ENCODE measurements at regions of chr17 and their contacts with region 1.

Region 1: DNA sequence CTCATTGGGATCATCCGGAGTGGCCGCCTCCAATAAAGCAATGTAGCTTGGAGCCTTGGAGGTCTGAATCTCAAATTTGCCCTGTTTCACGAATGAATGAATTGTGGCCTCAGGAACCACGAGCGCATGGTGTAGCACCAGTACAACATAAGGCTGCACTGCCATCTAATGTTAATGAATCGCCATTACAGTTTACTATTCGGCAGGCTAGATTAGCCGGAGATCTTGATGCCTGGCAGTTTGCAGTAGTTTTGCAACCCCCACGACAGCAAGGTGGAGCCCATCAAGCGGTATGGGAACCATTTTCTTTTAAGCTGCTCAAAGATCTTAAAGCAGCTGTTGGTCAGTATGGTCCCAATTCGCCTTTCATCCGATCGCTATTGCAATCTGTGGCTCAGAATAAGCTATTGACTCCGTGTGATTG is 18.8 kb downstream of the ALOX15B start:
- DNase-seq: peak; percentile 15
- H3K4me3 ChIP-seq: no peak overlapping the region
- H3K27me3 ChIP-seq: peaks cover 23% of the 10 kb centered on the region
- CTCF ChIP-seq: peak; percentile 69

Region 2: DNA sequence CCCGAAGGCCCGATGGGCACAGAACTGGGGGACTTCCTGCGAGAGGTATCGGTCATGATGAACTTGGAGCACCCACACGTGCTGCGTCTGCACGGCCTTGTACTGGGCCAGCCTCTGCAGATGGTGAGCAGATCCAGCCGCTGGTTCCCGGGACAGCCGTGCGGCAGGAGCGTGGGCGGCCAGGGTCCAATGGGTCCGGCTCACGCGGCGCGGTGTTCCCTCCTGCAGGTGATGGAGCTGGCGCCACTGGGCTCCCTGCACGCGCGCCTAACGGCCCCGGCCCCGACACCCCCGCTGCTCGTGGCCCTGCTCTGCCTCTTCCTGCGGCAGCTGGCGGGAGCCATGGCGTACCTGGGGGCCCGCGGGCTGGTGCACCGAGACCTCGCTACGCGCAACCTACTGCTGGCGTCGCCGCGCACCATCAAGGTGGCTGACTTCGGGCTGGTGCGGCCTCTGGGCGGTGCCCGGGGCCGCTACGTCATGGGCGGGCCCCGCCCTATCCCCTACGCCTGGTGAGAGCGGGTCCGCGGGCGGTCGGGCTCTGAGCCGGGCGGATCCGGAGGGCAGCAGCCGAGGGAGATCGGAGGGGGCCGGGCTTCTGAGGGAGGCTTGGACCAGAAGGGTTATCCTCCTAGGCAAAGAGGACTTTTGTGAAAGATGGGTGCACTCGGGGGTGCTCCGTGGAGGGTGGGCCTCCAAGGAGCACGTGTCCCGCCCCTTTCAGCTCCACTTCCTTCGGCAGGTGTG is 673.8 kb before region 1 on chr17:
- CTCF ChIA-PET with region 1: no interaction called
- POLR2A ChIA-PET with region 1: no interaction called
- DNase-seq: no peak
- H3K4me3 ChIP-seq: peak overlapping the region; percentile 34
- H3K27me3 ChIP-seq: peaks cover 8% of the 10 kb centered on the region
- CTCF ChIP-seq: no peak

Region 3: GRCh38 chr17:7862692-7863437 is 194.8 kb before region 1 on chr17:
- CTCF ChIA-PET with region 1: interaction called, 19 read pairs
- POLR2A ChIA-PET with region 1: no interaction called
- DNase-seq: no peak
- H3K4me3 ChIP-seq: no peak overlapping the region
- H3K27me3 ChIP-seq: no peaks in the 10 kb centered on the region
- CTCF ChIP-seq: peak; percentile 63

Region 4: DNA sequence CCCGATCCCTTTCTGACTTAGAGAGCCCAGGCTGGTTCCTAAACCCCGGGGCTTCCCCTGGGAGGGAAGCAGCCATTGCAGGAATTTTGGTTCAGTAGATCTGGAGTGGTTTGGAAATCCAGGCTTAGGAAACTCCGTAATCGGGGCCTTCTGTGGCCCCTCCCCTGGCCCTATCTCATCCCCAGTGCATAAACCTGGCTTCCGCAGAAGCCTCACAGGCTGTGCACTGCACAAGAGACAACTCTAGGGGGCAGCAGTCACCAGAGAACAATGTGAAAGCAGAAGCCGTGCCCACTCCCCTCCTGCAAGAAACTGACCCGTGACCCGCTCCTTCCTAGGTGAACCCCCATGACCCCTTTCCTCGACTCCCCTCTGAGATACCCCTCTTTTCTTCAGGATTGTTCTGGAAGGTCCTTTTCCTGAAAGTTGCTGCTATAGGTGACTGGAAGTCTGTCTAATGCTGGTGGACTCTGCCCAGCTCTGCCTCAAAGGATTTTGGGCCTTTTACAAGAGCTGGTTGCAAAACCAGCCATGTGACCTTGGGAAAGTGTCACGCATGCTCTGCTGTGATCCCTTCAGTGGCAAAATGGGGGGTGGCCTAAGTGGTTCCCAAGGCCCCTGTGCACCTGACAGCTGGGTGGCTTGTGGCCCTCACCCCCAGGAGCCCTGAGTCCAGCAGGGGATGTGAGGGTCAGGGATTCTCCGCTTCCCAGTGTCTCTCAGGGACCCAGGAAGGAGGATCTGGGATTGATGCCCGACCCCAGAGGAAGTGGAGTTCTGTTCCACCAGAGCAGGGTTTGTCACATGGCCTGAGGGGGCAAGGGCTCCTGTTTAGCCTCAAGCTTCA is 40.8 kb before region 1 on chr17:
- CTCF ChIA-PET with region 1: interaction called, 18 read pairs
- POLR2A ChIA-PET with region 1: no interaction called
- DNase-seq: no peak
- H3K4me3 ChIP-seq: peak overlapping the region; percentile 32; the same call in 1 of the 2 replicates
- H3K27me3 ChIP-seq: peaks cover 29% of the 10 kb centered on the region
- CTCF ChIP-seq: peak; percentile 52

Region 5: DNA sequence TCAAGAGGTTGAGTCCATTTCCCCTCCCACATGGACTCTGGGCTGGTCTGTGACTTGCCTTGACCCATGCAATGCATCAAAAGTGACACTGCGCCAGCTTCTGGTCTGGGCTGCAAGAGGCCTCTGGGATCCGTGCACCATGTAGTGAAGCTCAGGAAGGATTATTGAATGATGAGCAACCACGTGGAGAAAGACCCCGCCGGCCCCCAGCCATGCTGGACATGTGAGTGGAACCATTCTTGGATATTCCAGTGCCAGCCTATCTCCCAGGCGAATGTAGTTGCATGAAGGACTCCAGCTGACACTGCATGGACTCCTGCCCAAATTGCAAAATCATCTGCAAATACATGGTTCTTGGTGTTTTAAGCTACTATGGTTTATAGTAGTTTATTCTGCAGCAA is 26.4 kb before region 1 on chr17:
- CTCF ChIA-PET with region 1: interaction called, 10 read pairs
- POLR2A ChIA-PET with region 1: no interaction called
- DNase-seq: no peak
- H3K4me3 ChIP-seq: no peak overlapping the region
- H3K27me3 ChIP-seq: peaks cover 7% of the 10 kb centered on the region
- CTCF ChIP-seq: no peak

Region 6: GRCh38 chr17:8046306-8046928 is 11.3 kb before region 1 on chr17:
- CTCF ChIA-PET with region 1: interaction called, 31 read pairs
- POLR2A ChIA-PET with region 1: no interaction called
- DNase-seq: no peak
- H3K4me3 ChIP-seq: no peak overlapping the region
- H3K27me3 ChIP-seq: peaks cover 22% of the 10 kb centered on the region
- CTCF ChIP-seq: no peak

Region 7: GRCh38 chr17:8079291-8080207 is 21.8 kb after region 1 on chr17:
- CTCF ChIA-PET with region 1: interaction called, 72 read pairs
- POLR2A ChIA-PET with region 1: no interaction called
- DNase-seq: no peak
- H3K4me3 ChIP-seq: peak overlapping the region; percentile 44
- H3K27me3 ChIP-seq: peaks cover 21% of the 10 kb centered on the region
- CTCF ChIP-seq: peak; percentile 95

Region 8: GRCh38 chr17:8118769-8119580 is 61.3 kb after region 1 on chr17:
- CTCF ChIA-PET with region 1: interaction called, 18 read pairs
- POLR2A ChIA-PET with region 1: no interaction called
- DNase-seq: no peak
- H3K4me3 ChIP-seq: peak overlapping the region; percentile 53
- H3K27me3 ChIP-seq: peaks cover 17% of the 10 kb centered on the region
- CTCF ChIP-seq: peak; percentile 97